Dorsolateral prefrontal cortex (tissue), 120 donors: ENCODE measurements at regions of chr12 and their contacts with region 1.

Region 1: GRCh38 chr12:108810636-108811035 is 46.7 kb downstream of the SSH1 start:
- DNase-seq: no peak
- H3K4me3 ChIP-seq: no peak overlapping the region
- H3K27ac ChIP-seq: peak overlapping the region in 1 of 59 donors; percentile 17
- H3K27me3 ChIP-seq: no peaks in the 10 kb centered on the region
- CTCF ChIP-seq: no peak

Region 2: DNA sequence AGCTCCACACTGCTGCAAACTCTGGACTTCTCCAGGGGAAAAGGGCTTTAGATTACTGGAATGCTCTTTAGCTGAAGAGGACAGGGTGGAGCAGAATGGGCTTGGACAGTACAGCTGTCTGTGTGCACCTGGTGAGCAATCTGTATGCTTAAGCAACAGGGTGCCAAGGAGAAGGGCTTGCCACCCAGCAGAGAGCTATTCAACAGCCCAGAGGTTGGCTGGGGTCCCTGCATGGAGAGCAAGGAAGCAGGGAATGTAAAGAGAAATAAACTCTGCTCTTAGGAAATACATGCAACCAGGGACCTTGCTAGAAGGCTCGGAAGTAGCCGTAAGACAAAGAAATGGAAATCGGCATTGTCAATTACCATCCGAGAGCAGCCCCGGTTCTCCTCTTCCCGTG is 26.4 kb before region 1 on chr12:
- intact Hi-C with region 1: no loop called
- DNase-seq: no peak
- H3K4me3 ChIP-seq: no peak overlapping the region
- H3K27ac ChIP-seq: peak overlapping the region in 3 of 59 donors; percentile 7 to 44 (median 36)
- H3K27me3 ChIP-seq: no peaks in the 10 kb centered on the region
- CTCF ChIP-seq: no peak

Region 3: DNA sequence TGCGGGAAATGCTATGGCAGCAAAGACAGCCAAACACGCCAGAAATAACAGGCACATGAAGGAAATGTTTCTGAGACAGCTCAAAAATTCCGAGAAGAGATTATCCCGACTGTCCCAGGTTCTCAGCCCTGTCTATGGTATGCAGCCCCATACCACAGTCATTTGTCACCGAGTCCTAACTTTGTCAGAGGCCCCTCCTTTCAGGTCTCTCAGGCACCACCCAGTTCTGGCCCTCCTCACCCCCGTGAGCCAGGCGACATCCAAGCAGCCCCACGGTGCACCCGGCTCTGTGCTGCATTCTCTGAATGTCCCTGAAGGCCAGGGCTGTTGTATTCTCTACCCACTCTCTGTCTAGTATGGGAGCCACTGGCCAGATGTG is 22.7 kb after region 1 on chr12:
- intact Hi-C with region 1: loop called in 1 of 2 experiments (anchors 1 kb)
- DNase-seq: no peak
- H3K4me3 ChIP-seq: peak overlapping the region in 1 of 59 donors; percentile 12
- H3K27ac ChIP-seq: peak overlapping the region in 41 of 59 donors; percentile 0 to 81 (median 47)
- H3K27me3 ChIP-seq: no peaks in the 10 kb centered on the region
- CTCF ChIP-seq: no peak